ENCODE measurements at regions of chr10 and their contacts with region 1.

Region 1: DNA sequence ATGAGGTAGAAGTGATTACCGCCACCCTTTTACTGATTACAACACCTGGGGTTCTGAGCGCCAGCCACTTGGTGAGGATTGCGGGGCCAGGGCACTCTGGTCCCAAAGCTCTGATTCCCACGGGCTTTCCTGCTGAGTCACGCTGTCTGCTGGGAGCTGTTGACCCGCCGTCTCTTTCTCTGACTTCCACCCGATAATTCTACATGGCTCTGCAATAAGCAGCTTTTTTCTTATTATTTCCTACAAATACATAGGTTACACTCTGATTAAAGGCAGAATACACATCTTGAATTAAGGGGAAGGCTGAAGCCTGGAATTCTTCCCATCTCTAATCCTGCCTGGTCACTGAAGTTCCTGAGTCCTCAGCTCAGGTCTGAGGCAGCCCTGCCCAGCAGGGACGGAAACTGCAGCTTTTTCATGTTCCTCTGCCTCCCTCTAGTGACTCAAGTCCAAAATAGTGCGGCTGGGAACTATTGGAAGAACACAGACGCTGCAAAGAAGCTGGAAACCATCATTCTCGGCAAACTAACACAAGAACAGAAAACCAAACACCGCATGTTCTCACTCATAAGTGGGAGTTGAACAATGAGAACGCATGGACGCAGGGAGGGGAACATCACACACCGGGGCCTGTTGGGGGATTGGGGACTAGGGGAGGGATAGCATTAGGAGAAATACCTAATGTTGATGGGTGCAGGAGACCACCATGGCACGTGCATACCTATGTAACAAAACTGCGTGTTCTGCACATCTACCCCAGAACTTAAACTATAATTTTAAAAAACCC is 178.3 kb downstream of the PRKCQ start:
- DNase-seq: peak; percentile 81 to 94
- H3K4me3 ChIP-seq: peak overlapping the region; percentile 22 to 38 (median 32)
- H3K27ac ChIP-seq: peak overlapping the region in 4 of 5 donors; percentile 55 to 79 (median 72)
- H3K4me1 ChIP-seq: peaks cover 0 to 23% (median 15%) of the 10 kb centered on the region in 4 donors
- H3K27me3 ChIP-seq: no peaks in the 10 kb centered on the region
- CTCF ChIP-seq: peak in 5 of 7 experiments; percentile 56 to 95 (median 72)
- EP300 ChIP-seq: no peak
- POLR2A ChIP-seq: no peak

Region 2: DNA sequence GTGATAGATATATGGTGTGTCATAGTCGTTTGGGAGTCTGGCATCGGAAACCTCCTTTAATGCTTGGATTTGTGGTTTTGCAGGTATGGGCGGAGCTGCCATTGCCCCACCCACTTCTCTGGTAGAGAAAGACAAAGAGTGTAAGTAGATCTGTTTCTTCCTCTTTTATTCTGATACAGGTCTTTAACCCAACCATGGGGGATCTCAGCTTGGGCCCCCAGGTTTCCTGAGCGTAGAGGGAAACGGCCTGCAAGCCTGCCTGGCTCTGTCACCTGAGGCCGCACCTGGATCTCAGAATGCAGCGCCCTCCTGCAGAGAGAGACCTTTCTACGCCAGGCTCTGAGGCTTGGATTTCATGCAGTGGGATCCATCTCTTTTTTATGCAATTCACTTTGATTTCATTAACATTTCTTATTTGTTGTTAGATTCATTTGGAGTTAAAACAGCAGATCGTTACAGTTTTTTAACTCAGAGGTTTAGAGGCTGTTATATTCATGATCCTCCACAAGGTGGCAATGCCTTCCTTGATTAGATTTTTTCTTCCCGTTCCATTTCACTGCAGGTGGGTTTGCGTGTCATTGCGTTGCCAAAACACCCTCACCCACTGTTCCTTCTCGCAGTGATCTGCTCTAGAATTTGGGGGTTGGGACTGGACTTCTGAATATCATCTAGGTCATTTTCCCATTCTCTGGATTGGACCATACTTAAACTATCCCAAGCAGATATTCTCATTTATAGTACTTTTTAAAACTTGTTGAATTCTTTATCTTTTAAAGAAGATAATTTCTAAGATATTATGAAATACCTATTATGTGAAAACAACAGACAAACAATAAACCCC is 292.9 kb before region 1 on chr10:
- intact Hi-C with region 1: loop called (anchors 5 kb)
- DNase-seq: peak in 1 of 2 donors; percentile 72
- H3K4me3 ChIP-seq: no peak overlapping the region
- H3K27ac ChIP-seq: no peak overlapping the region
- H3K4me1 ChIP-seq: peaks cover 0 to 14% (median 8%) of the 10 kb centered on the region in 4 donors
- H3K27me3 ChIP-seq: no peaks in the 10 kb centered on the region
- CTCF ChIP-seq: peak in 5 of 7 experiments; percentile 50 to 83 (median 65)
- EP300 ChIP-seq: no peak
- POLR2A ChIP-seq: no peak

Region 3: DNA sequence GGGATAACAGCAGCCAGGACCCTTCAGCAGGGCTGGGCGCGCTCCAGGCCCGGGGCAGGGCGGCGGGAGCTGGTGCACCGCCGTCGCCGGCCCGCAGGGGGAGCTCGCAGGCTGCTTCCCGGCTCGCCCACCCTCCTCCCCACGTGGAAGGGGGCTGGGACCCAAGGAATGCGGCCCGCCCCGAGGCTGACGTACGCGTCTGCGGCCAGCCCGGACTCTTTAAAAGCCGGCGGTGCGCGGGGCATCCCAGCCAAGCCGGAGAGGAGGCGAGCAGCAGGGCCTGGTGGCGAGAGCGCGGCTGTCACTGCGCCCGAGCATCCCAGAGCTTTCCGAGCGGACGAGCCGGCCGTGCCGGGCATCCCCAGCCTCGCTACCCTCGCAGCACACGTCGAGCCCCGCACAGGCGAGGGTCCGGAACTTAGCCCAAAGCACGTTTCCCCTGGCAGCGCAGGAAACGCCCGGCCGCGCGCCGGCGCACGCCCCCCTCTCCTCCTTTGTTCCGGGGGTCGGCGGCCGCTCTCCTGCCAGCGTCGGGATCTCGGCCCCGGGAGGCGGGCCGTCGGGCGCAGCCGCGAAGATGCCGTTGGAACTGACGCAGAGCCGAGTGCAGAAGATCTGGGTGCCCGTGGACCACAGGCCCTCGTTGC is 198.9 kb before region 1 on chr10 and contains the start of gene PFKFB3:
- intact Hi-C with region 1: loop called (anchors 10 kb)
- DNase-seq: peak; percentile 97 to 98
- H3K4me3 ChIP-seq: peak within 1 kb of the TSS; percentile 77 to 88 (median 81)
- H3K27ac ChIP-seq: peak within 1 kb of the TSS; percentile 95 to 99 (median 97)
- H3K4me1 ChIP-seq: peaks cover 17 to 69% (median 56%) of the 10 kb centered on the region in 4 donors
- H3K27me3 ChIP-seq: no peaks in the 10 kb centered on the region
- CTCF ChIP-seq: peak in 6 of 7 experiments; percentile 91 to 100 (median 98)
- EP300 ChIP-seq: no peak
- POLR2A ChIP-seq: peak in 2 of 4 donors; percentile 89 to 98
- total RNA-seq, gene PFKFB3: 18.0 to 199 (median 41.5) TPM

Region 4: DNA sequence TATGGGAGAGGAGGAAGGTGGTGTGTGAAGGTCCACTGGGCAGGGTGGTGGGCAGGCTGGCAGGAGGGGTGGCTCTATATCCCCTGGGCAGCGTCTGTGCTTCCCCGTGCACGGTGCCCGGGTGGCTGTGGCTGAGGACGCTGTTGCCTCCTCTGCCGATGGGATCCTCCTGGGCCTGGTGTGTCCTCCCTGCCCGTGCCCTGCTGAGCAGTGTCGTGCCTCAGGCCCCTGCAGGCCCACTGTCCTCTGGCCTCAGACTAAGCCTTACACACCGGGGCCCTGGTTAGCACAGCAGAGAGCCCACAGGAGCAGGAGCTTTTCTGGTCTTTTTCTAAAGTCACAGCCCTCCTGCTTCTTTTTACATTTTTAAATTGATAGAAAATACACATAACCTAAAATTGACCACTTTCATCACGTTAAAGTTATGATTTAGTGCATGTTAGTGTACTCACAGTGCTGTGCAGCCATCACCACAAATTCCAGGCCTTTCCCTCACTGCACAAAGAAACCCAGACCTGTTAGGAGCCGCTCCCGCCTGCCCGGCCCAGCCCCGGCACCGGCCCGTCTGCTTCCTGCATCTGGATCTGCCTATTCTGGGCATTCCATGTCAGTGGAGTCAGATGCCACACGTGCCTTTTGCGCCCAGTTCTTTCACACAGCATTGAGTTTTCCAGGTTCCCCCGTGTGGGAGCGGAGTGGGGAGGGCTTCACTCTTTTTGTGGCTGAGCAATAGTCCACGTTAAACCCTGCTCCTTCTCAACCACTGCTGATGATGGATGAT is 179.6 kb before region 1 on chr10:
- intact Hi-C with region 1: loop called (anchors 10 kb)
- DNase-seq: no peak
- H3K4me3 ChIP-seq: no peak overlapping the region
- H3K27ac ChIP-seq: peak overlapping the region in 1 of 5 donors; percentile 36
- H3K4me1 ChIP-seq: no peaks in the 10 kb centered on the region
- H3K27me3 ChIP-seq: no peaks in the 10 kb centered on the region
- CTCF ChIP-seq: no peak
- EP300 ChIP-seq: no peak
- POLR2A ChIP-seq: no peak

Region 5: GRCh38 chr10:6269953-6270867 is 131.5 kb before region 1 on chr10:
- intact Hi-C with region 1: no loop called
- DNase-seq: peak; percentile 38 to 45
- H3K4me3 ChIP-seq: no peak overlapping the region
- H3K27ac ChIP-seq: peak overlapping the region; percentile 14 to 75 (median 69)
- H3K4me1 ChIP-seq: peaks cover 11 to 67% (median 29%) of the 10 kb centered on the region in 4 donors
- H3K27me3 ChIP-seq: no peaks in the 10 kb centered on the region
- CTCF ChIP-seq: no peak
- EP300 ChIP-seq: no peak
- POLR2A ChIP-seq: no peak

Measured in stomach (tissue), 19 donors.